HCT116 (cell line): ENCODE measurements at regions of chr16 and their contacts with region 1.

Region 1: GRCh38 chr16:10918294-10919002 is 23.8 kb downstream of the DEXI start:
- DNase-seq: peak; percentile 88
- ATAC-seq: peak; percentile 96
- H3K4me3 ChIP-seq: peak overlapping the region; percentile 8 to 19; a peak in 2 of 4 replicates
- H3K27ac ChIP-seq: no peak overlapping the region; the same call in 1 of the 2 replicates
- H3K4me1 ChIP-seq: peaks cover 7 to 29% of the 10 kb centered on the region in 2 experiments; a peak in 3 of 4 replicates
- H3K27me3 ChIP-seq: no peaks in the 10 kb centered on the region
- CTCF ChIP-seq: peak; percentile 80 to 99 (median 95)
- POLR2A ChIP-seq: no peak
- RAD21 ChIP-seq: peak; percentile 95

Region 2: DNA sequence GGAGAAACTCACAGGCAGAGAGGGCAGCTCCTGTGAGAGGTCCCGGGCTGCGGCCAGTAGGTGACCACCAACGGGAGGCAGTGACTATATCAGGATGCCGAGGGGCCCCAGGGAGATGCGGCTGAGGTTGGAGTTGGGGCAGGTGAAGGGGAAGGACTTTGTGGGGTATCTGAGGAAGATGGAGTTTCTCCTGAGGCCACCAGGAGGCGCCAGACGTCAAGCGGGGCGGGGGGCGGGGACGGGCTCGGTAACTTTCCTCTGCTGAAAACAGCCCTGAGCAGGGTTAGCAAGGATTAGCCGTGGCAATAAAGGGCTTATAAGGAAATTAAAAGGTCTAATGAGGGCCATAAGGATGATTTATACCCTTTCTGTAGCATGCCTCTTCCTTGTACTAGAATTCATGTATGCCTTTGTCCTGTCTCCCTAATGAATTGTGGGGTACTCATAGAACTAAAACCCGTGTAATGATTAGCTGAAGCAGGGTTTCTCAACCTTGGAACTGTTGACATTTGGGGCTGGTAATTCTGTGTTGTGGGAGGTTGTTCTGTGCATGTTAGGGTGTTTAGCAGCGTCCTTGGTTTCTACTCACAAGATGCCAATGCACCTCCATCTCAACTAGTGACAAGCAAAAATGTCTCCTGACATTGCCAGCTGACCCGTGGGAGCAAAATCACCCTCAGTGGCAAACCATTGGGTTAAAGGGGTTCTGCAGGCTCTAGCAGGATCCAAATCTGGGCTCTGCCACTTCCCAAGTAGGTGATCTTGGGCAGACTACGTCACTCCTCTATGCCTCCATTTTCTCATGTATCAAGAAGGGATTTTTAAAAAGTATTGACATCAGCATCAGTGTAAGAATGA is 661.4 kb before region 1 on chr16:
- CTCF ChIA-PET with region 1: no interaction called
- POLR2A ChIA-PET with region 1: no interaction called
- RAD21 ChIA-PET with region 1: no interaction called
- intact Hi-C with region 1: loop called (anchors 5 kb)
- DNase-seq: no peak
- ATAC-seq: peak; percentile 92
- H3K4me3 ChIP-seq: no peak overlapping the region
- H3K27ac ChIP-seq: no peak overlapping the region
- H3K4me1 ChIP-seq: peaks cover 0 to 4% of the 10 kb centered on the region in 2 experiments; a peak in 1 of 4 replicates
- H3K27me3 ChIP-seq: no peaks in the 10 kb centered on the region
- CTCF ChIP-seq: peak; percentile 16 to 64 (median 62); a peak in 5 of 6 replicates
- POLR2A ChIP-seq: no peak
- RAD21 ChIP-seq: peak; percentile 48

Region 3: GRCh38 chr16:10579965-10580882 is 338.2 kb before region 1 on chr16 and contains the start of gene EMP2:
- CTCF ChIA-PET with region 1: interaction called, 7 read pairs
- POLR2A ChIA-PET with region 1: no interaction called
- RAD21 ChIA-PET with region 1: no interaction called
- intact Hi-C with region 1: loop called (anchors 5 kb)
- DNase-seq: peak; percentile 36
- ATAC-seq: peak; percentile 90
- H3K4me3 ChIP-seq: peak within 1 kb of the TSS; percentile 68 to 83
- H3K27ac ChIP-seq: peak within 1 kb of the TSS; percentile 88
- H3K4me1 ChIP-seq: peaks cover 38 to 47% of the 10 kb centered on the region in 2 experiments
- H3K27me3 ChIP-seq: no peaks in the 10 kb centered on the region
- CTCF ChIP-seq: peak; percentile 63 to 82 (median 71); a peak in 5 of 6 replicates
- POLR2A ChIP-seq: no peak
- RAD21 ChIP-seq: peak; percentile 51; the same call in 1 of the 2 replicates
- total RNA-seq, gene EMP2: 32.6 TPM

Region 4: DNA sequence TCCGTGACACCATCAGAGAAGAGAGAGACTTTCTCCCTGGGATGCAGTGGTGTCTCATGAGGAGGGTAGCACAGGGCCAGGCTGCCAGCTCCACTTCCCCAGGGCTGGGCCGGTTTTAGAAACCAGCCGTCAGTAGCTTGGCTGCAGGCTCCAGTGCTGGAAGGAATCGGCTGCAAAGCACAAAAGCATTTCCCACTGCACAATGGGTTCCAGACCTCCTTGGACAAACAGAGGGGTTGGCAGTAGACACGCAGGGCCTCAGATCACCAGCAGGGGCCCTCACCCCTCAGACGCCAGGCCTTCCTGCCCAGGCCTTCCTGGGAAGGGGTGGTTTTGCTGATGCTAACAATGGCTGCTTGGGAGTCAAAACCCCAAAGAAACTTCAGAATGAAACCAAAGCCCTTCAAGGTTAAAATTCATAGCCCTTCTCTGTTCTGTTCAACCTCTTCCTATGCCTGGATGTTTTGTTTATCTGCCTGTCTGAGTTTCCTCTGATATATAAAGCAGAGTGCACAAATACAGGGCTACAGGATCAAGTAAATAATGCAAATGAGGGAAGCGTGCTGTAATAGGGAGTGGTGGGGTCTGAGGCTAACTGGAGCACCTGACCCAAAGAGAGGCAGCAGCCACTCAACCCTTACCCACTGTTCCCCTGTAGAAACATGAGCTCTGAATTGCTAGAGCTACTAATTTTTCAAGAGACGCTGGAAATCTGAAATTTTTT is 250.0 kb before region 1 on chr16:
- CTCF ChIA-PET with region 1: interaction called, 6 read pairs
- POLR2A ChIA-PET with region 1: no interaction called
- RAD21 ChIA-PET with region 1: no interaction called
- intact Hi-C with region 1: loop called (anchors 5 kb)
- DNase-seq: no peak
- ATAC-seq: peak; percentile 98
- H3K4me3 ChIP-seq: no peak overlapping the region
- H3K27ac ChIP-seq: no peak overlapping the region
- H3K4me1 ChIP-seq: no peaks in the 10 kb centered on the region
- H3K27me3 ChIP-seq: no peaks in the 10 kb centered on the region
- CTCF ChIP-seq: peak; percentile 30 to 81 (median 63); a peak in 5 of 6 replicates
- POLR2A ChIP-seq: no peak
- RAD21 ChIP-seq: peak; percentile 48

Region 5: DNA sequence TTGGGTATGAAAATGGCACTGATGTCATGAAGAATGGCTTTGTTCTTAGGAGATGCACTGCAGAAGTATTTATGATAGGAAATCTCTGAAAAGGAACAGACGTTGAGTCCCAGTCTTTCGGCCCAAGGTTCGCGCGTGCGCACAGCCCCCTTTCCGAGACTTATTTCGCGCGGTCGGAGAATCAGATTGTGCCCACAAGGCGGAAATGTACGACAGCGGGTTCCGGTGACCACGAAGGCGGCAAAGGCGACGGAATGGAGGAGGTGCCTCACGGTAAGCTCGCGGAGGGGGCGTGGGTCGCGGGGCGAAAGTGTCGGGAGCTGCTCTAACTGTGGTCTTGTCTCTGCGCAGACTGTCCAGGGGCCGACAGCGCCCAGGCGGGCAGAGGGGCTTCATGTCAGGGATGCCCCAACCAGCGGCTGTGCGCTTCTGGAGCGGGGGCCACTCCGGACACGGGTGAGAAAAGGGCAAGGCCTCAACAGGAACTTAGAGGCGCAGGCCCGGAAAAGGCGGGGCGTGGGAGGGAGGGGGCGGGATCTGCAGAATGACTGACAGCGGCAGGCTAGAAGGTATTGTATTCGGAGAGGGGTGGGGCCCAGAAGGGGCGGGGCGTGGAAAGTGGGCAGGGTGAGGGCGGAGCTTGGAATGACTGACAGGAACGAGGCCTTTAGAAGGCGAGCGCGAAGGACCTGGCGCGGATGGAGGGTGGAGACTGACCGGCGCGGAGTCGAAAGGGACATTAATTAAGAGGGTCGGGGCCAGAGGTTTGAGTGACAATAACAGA is 174.6 kb before region 1 on chr16 and contains the start of gene NUBP1:
- CTCF ChIA-PET with region 1: interaction called, 19 read pairs
- POLR2A ChIA-PET with region 1: interaction called, 4 read pairs
- RAD21 ChIA-PET with region 1: interaction called, 3 to 4 read pairs
- intact Hi-C with region 1: loop called (anchors 2 kb)
- DNase-seq: peak; percentile 97
- ATAC-seq: peak; percentile 92
- H3K4me3 ChIP-seq: peak within 1 kb of the TSS; percentile 58 to 68
- H3K27ac ChIP-seq: peak within 1 kb of the TSS; percentile 85
- H3K4me1 ChIP-seq: peaks cover 16 to 37% of the 10 kb centered on the region in 2 experiments
- H3K27me3 ChIP-seq: no peaks in the 10 kb centered on the region
- CTCF ChIP-seq: no peak
- POLR2A ChIP-seq: peak; percentile 79
- RAD21 ChIP-seq: no peak
- total RNA-seq, gene NUBP1: 31.5 TPM

Region 6: DNA sequence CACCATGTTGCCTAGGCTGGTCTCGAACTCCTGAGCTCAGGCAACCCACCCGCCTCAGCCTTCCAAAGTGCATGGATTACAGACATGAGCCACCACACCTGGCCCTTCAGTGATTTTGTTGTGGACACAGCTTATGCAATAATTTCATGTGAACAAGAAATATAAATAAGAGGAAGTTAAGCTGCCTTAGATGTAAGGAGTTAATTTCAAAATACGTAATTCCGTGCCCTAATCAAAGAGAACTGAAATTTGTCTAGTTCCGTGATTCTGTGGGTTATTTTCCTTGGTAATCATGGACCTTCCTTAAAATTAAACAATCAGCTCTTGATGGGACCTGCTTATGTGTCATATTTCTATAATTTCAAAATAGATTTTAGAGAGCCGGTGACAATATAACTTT is 111.8 kb before region 1 on chr16:
- CTCF ChIA-PET with region 1: no interaction called
- POLR2A ChIA-PET with region 1: no interaction called
- RAD21 ChIA-PET with region 1: no interaction called
- intact Hi-C with region 1: loop called (anchors 10 kb)
- DNase-seq: no peak
- ATAC-seq: no peak
- H3K4me3 ChIP-seq: no peak overlapping the region
- H3K27ac ChIP-seq: no peak overlapping the region
- H3K4me1 ChIP-seq: no peaks in the 10 kb centered on the region
- H3K27me3 ChIP-seq: 0 out of 2 replicates have a peak, but pooled peaks cover 2% of the 10 kb centered on the region
- CTCF ChIP-seq: no peak
- POLR2A ChIP-seq: no peak
- RAD21 ChIP-seq: no peak

Region 7: GRCh38 chr16:10902999-10903398 is 15.4 kb before region 1 on chr16:
- CTCF ChIA-PET with region 1: no interaction called
- POLR2A ChIA-PET with region 1: no interaction called
- RAD21 ChIA-PET with region 1: no interaction called
- intact Hi-C with region 1: no loop called
- DNase-seq: no peak
- ATAC-seq: no peak
- H3K4me3 ChIP-seq: no peak overlapping the region
- H3K27ac ChIP-seq: no peak overlapping the region
- H3K4me1 ChIP-seq: no peaks in the 10 kb centered on the region
- H3K27me3 ChIP-seq: no peaks in the 10 kb centered on the region
- CTCF ChIP-seq: no peak
- POLR2A ChIP-seq: no peak
- RAD21 ChIP-seq: no peak

Region 8: DNA sequence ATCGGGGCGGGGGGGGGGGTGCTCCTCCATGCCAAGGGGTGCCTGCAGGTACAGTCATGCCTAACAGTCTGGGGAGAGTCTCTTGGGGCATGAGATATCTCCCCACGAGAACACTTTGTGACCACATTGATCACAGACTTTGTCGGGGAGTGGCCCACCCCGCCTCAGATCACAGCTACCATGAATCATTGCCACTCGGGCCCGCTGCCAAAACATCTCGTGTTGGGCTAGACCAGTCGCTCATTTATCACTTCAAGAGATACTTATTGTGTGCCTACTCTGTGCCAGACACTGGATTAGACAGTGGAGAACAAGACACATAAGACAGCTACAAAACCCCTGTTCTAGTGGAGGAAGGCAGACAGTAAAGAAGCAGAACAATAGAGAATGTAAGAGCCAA is 98.5 kb after region 1 on chr16:
- CTCF ChIA-PET with region 1: no interaction called
- POLR2A ChIA-PET with region 1: no interaction called
- RAD21 ChIA-PET with region 1: no interaction called
- intact Hi-C with region 1: no loop called
- DNase-seq: peak; percentile 32
- ATAC-seq: peak; percentile 87
- H3K4me3 ChIP-seq: peak overlapping the region in 1 of 2 experiments; percentile 35; a peak in 2 of 4 replicates
- H3K27ac ChIP-seq: no peak overlapping the region
- H3K4me1 ChIP-seq: peaks cover 20 to 21% of the 10 kb centered on the region in 2 experiments
- H3K27me3 ChIP-seq: no peaks in the 10 kb centered on the region
- CTCF ChIP-seq: no peak
- POLR2A ChIP-seq: no peak
- RAD21 ChIP-seq: no peak